OCI-LY7 (cell line): ENCODE measurements at regions of chr5 and their contacts with region 1.

Region 1: GRCh38 chr5:58491216-58491892 is at the start of gene GAPT:
- DNase-seq: peak; percentile 85
- H3K4me3 ChIP-seq: peak within 1 kb of the TSS; percentile 73
- H3K27ac ChIP-seq: peak within 1 kb of the TSS; percentile 79
- H3K4me1 ChIP-seq: peaks cover 36% of the 10 kb centered on the region
- CTCF ChIP-seq: no peak
- total RNA-seq, gene GAPT: 15.1 and 16.6 TPM in 2 replicates

Region 2: DNA sequence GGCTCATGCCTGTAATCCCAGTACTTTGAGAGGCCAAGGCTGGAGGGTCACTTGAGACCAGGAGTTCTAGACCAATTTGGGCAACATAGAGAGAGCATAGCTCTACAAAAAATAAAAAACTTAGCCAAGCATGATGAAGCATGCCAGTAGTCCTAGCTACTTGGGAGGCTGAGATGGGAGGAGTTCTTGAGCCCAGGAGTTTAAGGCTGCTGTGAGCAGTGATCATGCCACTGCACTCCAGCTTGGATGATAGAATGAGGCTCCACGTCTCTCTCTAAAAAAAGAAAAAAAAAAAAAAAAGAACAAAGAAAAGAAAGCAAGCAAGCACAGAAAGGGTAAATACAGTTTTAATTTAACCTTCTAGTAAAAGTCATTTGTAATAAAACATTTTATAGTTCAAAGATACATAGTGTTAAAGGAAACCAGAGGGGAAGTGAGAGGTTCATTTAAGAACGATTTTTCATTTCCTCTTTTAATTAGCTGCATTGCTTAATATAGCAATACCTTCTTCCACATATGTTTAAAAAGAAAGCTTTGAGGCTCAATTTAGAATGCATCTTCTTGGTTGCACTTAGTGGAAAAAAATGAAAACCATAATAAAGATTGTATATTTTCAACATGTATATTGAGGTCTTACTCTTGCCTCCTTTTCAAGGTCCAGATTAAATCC is 14.8 kb after region 1 on chr5:
- CTCF ChIA-PET with region 1: interaction called, 3 read pairs
- POLR2A ChIA-PET with region 1: interaction called, 4 read pairs
- intact Hi-C with region 1: loop called (anchors 2 kb)
- DNase-seq: peak; percentile 67
- H3K4me3 ChIP-seq: no peak overlapping the region
- H3K27ac ChIP-seq: no peak overlapping the region
- H3K4me1 ChIP-seq: peaks cover 17% of the 10 kb centered on the region
- CTCF ChIP-seq: no peak